ENCODE measurements at regions of chr3 and their contacts with region 1.

Region 1: DNA sequence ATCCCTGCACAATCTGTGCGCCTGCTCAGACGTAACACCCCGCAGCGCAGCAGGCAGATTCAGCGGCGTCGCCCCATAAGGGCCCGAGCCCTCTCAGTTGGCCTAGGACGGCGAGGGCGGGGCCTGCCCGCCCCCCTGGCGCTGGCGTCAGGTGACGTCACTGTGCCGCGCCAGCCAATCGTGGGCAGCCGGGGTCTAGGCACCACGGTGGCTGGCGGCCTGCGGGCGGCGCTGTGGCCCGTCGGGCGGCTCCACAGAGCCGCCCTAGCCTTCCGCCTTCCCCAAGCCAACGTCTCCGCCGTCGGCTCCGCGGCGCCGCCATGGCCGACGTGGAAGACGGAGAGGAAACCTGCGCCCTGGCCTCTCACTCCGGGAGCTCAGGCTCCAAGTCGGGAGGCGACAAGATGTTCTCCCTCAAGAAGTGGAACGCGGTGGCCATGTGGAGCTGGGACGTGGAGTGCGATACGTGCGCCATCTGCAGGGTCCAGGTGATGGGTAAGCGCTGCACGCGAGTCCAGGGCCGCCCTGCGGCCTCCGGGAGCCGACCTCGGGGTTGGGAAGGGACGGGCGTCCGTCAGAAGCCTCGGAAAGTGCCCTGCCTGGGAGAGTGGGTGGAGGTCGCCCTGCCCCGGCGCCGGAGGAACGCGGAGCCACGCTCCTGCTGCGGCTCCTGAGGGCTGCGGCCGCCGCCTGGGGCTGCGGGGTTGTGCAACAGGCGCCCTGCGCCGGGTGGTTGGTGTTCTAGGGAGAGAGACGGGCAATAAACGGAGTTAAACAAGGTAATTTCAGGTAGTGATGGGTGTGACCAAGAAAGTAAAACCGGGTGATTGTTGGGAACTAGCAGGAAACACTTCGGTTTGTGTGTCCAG is at the start of gene RNF7:
- DNase-seq: peak; percentile 99
- ATAC-seq: peak; percentile 90 to 98 (median 93)
- H3K4me3 ChIP-seq: peak within 1 kb of the TSS; percentile 94
- H3K4me3 Mint-ChIP-seq: peak within 1 kb of the TSS; percentile 100
- H3K27ac ChIP-seq: peak within 1 kb of the TSS; percentile 91
- H3K27ac Mint-ChIP-seq: peak within 1 kb of the TSS; percentile 96 to 97
- H3K4me1 ChIP-seq: peaks cover 4% of the 10 kb centered on the region
- H3K4me1 Mint-ChIP-seq: peaks cover 41 to 47% of the 10 kb centered on the region in 2 donors
- H3K27me3 ChIP-seq: no peaks in the 10 kb centered on the region
- H3K27me3 Mint-ChIP-seq: peaks cover 0 to 7% of the 10 kb centered on the region in 2 donors
- CTCF ChIP-seq: peak; percentile 90
- total RNA-seq, gene RNF7: 65.0 to 75.0 (median 73.4) TPM

Region 2: GRCh38 chr3:141105828-141106628 is 632.2 kb before region 1 on chr3:
- intact Hi-C with region 1: no loop called
- DNase-seq: peak; percentile 22 to 84
- ATAC-seq: peak in 2 of 3 donors; percentile 62 to 73
- H3K4me3 ChIP-seq: no peak overlapping the region
- H3K4me3 Mint-ChIP-seq: no peak overlapping the region
- H3K27ac ChIP-seq: no peak overlapping the region
- H3K27ac Mint-ChIP-seq: no peak overlapping the region
- H3K4me1 ChIP-seq: no peaks in the 10 kb centered on the region
- H3K4me1 Mint-ChIP-seq: no peaks in the 10 kb centered on the region
- H3K27me3 ChIP-seq: no peaks in the 10 kb centered on the region
- H3K27me3 Mint-ChIP-seq: peaks cover 6% of the 10 kb centered on the region in 2 donors
- CTCF ChIP-seq: peak; percentile 82

Region 3: GRCh38 chr3:141311496-141312353 is 426.5 kb before region 1 on chr3:
- intact Hi-C with region 1: loop called (anchors 2 kb)
- DNase-seq: peak; percentile 93 to 98
- ATAC-seq: peak; percentile 96 to 99 (median 98)
- H3K4me3 ChIP-seq: peak overlapping the region; percentile 64
- H3K4me3 Mint-ChIP-seq: peak overlapping the region; percentile 100
- H3K27ac ChIP-seq: peak overlapping the region; percentile 81
- H3K27ac Mint-ChIP-seq: peak overlapping the region; percentile 96 to 98
- H3K4me1 ChIP-seq: peaks cover 20% of the 10 kb centered on the region
- H3K4me1 Mint-ChIP-seq: peaks cover 30 to 31% of the 10 kb centered on the region in 2 donors
- H3K27me3 ChIP-seq: no peaks in the 10 kb centered on the region
- H3K27me3 Mint-ChIP-seq: no peaks in the 10 kb centered on the region
- CTCF ChIP-seq: peak; percentile 48

Region 4: DNA sequence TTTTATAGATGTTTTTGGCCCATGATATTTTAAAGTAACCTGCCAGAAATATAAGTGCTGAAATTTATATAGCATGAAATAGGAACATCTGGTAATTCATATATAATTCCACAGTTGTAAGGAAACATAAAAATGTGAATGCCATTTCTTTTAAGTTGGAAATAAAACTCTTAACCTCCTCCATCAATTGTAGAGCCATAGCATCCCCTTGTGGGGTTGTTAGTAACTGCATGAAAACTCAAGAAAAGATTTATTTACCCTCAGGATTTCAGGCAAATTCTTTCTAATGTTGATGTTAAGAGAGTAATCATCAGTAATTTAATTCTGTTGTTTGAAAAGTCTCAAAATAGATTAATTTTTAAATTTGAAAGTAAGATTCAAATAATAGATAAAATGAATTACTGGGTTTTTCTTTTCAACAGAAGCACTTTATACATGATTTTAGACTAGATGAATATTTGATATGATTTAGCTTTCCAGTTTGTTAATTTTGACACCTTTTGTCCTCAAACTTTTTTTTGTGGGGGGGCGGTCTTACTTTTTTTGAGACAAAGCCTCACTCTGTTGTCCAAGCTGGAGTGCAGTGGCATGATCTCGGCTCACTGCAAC is 176.7 kb before region 1 on chr3:
- intact Hi-C with region 1: no loop called
- DNase-seq: peak in 1 of 2 donors; percentile 87
- ATAC-seq: peak; percentile 73 to 85 (median 77)
- H3K4me3 ChIP-seq: no peak overlapping the region
- H3K4me3 Mint-ChIP-seq: no peak overlapping the region
- H3K27ac ChIP-seq: no peak overlapping the region
- H3K27ac Mint-ChIP-seq: peak overlapping the region; percentile 39 to 79
- H3K4me1 ChIP-seq: no peaks in the 10 kb centered on the region
- H3K4me1 Mint-ChIP-seq: peaks cover 19% of the 10 kb centered on the region in 2 donors
- H3K27me3 ChIP-seq: no peaks in the 10 kb centered on the region
- H3K27me3 Mint-ChIP-seq: no peaks in the 10 kb centered on the region
- CTCF ChIP-seq: peak; percentile 100

Region 5: DNA sequence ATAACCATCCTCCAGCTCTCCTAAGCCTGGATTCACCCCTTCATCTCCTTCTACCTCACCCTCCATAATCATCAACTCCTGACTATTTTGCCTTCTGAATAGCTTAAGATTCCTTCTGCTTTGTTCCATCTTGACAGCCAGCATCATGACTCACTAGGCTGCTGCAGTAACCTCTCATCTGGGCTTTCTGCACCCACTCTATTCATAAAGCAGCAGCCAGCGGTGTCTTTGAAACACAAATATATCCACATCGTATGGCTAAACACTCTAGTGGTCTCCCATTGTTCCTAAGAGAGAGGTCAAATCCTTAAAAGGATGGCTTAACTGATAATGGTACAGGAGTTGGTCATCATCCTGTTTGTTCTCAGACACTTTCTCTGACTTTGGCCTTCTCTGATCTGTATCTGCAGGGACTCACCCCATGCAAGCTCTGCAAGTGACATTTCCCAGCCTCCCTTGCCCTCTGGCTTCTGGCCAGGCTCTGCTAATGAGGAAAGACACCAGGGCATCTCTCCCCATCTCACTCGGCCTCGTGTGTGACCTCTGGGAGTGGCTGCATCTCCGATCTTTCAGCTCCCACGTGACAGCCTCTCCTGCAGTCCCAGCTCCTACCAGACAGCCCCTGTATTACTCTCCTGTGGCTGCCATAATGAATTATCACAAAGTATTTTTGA is 31.1 kb after region 1 on chr3:
- intact Hi-C with region 1: no loop called
- DNase-seq: no peak
- ATAC-seq: no peak
- H3K4me3 ChIP-seq: no peak overlapping the region
- H3K4me3 Mint-ChIP-seq: no peak overlapping the region
- H3K27ac ChIP-seq: no peak overlapping the region
- H3K27ac Mint-ChIP-seq: no peak overlapping the region
- H3K4me1 ChIP-seq: no peaks in the 10 kb centered on the region
- H3K4me1 Mint-ChIP-seq: no peaks in the 10 kb centered on the region
- H3K27me3 ChIP-seq: no peaks in the 10 kb centered on the region
- H3K27me3 Mint-ChIP-seq: no peaks in the 10 kb centered on the region
- CTCF ChIP-seq: no peak

Region 6: DNA sequence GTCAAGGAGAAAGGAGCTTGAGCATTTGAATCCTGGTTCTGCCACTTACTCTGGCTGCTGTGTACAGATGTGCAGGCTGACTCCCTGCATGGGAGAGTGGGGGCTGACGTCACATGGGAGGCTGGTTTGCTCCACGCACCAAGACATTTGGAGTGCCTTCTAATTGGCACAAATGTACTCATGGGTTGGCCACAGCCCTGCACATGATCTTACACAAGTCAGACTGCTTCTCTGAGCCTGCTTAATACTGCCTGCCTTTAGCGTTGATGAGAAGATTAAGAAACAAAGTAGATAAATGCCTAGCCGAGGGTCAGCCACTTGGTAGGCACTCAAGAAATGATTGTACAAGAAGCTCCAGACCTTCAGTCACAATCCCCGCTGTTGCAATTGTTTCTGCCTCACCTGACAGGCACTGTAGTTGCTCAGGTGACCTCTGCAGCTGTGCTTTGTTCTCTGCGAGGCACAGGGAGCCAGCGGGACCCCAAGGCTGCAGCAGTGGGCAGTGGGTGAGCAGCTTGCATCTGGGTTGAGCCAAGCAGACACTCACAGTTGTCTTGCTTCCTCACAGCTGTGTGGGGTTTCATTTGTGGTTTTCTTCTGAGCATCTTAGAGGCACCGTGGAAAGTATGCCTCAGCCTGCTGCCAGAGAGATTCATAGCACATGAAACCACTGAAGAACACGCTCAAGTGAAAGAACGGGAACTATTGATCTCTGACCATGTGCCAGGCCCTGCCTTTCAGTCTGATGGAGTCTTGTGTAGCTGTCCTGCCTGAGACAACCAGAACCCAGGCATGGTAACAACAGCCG is 58.0 kb after region 1 on chr3:
- intact Hi-C with region 1: loop called (anchors 1 kb)
- DNase-seq: peak; percentile 24 to 78
- ATAC-seq: peak; percentile 72 to 83 (median 81)
- H3K4me3 ChIP-seq: no peak overlapping the region
- H3K4me3 Mint-ChIP-seq: peak overlapping the region; percentile 88
- H3K27ac ChIP-seq: peak overlapping the region; percentile 88
- H3K27ac Mint-ChIP-seq: peak overlapping the region; percentile 95
- H3K4me1 ChIP-seq: peaks cover 53% of the 10 kb centered on the region
- H3K4me1 Mint-ChIP-seq: peaks cover 52 to 58% of the 10 kb centered on the region in 2 donors
- H3K27me3 ChIP-seq: no peaks in the 10 kb centered on the region
- H3K27me3 Mint-ChIP-seq: no peaks in the 10 kb centered on the region
- CTCF ChIP-seq: no peak

Region 7: DNA sequence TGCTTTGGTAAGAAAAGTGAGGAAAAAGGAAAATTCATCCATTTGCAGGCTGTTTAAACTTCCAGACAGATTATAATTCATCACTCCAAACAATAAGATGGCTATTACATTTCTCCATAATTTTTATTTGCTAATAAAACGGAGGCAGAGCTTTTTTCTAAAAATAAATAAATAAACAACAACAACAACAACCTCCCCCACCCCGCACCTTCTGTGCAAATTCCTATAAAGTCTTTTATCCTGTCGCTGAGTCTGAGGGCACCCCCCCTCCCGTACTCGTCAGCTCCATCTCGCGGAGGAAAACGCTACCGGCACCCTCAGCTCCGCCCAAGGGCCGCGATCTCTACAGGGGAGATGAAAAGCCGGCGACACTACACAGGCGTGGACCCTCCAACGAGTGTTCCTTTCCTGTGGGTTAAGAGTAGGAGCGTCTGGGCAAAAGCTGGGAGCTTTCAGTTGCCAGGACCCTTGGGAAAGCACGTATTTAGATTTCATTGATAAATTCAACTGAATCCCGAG is 137.2 kb after region 1 on chr3:
- intact Hi-C with region 1: loop called (anchors 1 kb)
- DNase-seq: peak; percentile 74 to 91
- ATAC-seq: peak; percentile 63 to 81 (median 67)
- H3K4me3 ChIP-seq: peak overlapping the region; percentile 64
- H3K4me3 Mint-ChIP-seq: peak overlapping the region; percentile 96
- H3K27ac ChIP-seq: peak overlapping the region; percentile 94
- H3K27ac Mint-ChIP-seq: peak overlapping the region; percentile 81 to 95
- H3K4me1 ChIP-seq: peaks cover 6% of the 10 kb centered on the region
- H3K4me1 Mint-ChIP-seq: peaks cover 23 to 32% of the 10 kb centered on the region in 2 donors
- H3K27me3 ChIP-seq: no peaks in the 10 kb centered on the region
- H3K27me3 Mint-ChIP-seq: no peaks in the 10 kb centered on the region
- CTCF ChIP-seq: peak; percentile 85

Region 8: GRCh38 chr3:141913150-141913811 is 175.0 kb after region 1 on chr3:
- intact Hi-C with region 1: loop called (anchors 1 kb)
- DNase-seq: peak in 1 of 2 donors; percentile 79
- ATAC-seq: peak; percentile 82 to 96 (median 91)
- H3K4me3 ChIP-seq: no peak overlapping the region
- H3K4me3 Mint-ChIP-seq: no peak overlapping the region
- H3K27ac ChIP-seq: no peak overlapping the region
- H3K27ac Mint-ChIP-seq: peak overlapping the region in 1 of 2 donors; percentile 25
- H3K4me1 ChIP-seq: no peaks in the 10 kb centered on the region
- H3K4me1 Mint-ChIP-seq: peaks cover 6% of the 10 kb centered on the region in 2 donors
- H3K27me3 ChIP-seq: no peaks in the 10 kb centered on the region
- H3K27me3 Mint-ChIP-seq: no peaks in the 10 kb centered on the region
- CTCF ChIP-seq: peak; percentile 80

Region 9: DNA sequence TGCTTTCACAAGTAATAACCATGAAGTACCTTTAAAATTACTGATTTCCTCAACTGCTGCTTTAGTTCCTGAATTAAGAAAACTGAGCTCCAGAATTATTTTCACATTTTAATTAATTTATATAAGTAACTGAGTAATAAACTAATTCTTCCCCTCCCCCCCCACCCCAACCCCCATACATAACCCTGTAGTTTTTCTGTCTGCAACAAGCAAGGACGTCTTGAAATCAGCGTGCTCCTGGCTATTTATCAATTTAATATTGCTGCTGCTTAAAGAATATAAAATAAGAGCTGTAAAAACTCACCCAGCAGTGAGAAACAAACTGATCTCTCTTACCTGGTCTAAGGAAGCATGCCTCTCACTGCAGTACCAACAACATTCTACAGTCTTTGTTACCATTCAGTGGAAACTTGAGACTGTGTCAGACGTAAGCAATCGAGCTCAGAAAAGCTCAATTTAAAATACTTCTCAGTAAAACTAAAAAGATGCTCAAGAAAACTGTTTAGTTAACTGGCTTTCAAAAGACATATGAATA is 290.1 kb after region 1 on chr3:
- intact Hi-C with region 1: loop called (anchors 5 kb)
- DNase-seq: peak in 1 of 2 donors; percentile 74
- ATAC-seq: peak; percentile 72 to 79 (median 73)
- H3K4me3 ChIP-seq: peak overlapping the region; percentile 42
- H3K4me3 Mint-ChIP-seq: peak overlapping the region; percentile 96
- H3K27ac ChIP-seq: peak overlapping the region; percentile 30
- H3K27ac Mint-ChIP-seq: peak overlapping the region; percentile 87 to 91
- H3K4me1 ChIP-seq: peaks cover 3% of the 10 kb centered on the region
- H3K4me1 Mint-ChIP-seq: peaks cover 32 to 41% of the 10 kb centered on the region in 2 donors
- H3K27me3 ChIP-seq: no peaks in the 10 kb centered on the region
- H3K27me3 Mint-ChIP-seq: no peaks in the 10 kb centered on the region
- CTCF ChIP-seq: no peak

Region 10: GRCh38 chr3:142447852-142448823 is 709.9 kb after region 1 on chr3 and contains the start of gene XRN1:
- intact Hi-C with region 1: loop called (anchors 5 kb)
- DNase-seq: peak; percentile 96 to 97
- ATAC-seq: peak; percentile 94 to 99 (median 96)
- H3K4me3 ChIP-seq: peak within 1 kb of the TSS; percentile 96
- H3K4me3 Mint-ChIP-seq: peak within 1 kb of the TSS; percentile 100
- H3K27ac ChIP-seq: peak within 1 kb of the TSS; percentile 97
- H3K27ac Mint-ChIP-seq: peak within 1 kb of the TSS; percentile 99 to 100
- H3K4me1 ChIP-seq: peaks cover 12% of the 10 kb centered on the region
- H3K4me1 Mint-ChIP-seq: peaks cover 45 to 46% of the 10 kb centered on the region in 2 donors
- H3K27me3 ChIP-seq: no peaks in the 10 kb centered on the region
- H3K27me3 Mint-ChIP-seq: no peaks in the 10 kb centered on the region
- CTCF ChIP-seq: no peak
- total RNA-seq, gene XRN1: 116 to 141 (median 128) TPM